IMR-90 (cell line): ENCODE measurements at regions of chr20 and their contacts with region 1.

Region 1: DNA sequence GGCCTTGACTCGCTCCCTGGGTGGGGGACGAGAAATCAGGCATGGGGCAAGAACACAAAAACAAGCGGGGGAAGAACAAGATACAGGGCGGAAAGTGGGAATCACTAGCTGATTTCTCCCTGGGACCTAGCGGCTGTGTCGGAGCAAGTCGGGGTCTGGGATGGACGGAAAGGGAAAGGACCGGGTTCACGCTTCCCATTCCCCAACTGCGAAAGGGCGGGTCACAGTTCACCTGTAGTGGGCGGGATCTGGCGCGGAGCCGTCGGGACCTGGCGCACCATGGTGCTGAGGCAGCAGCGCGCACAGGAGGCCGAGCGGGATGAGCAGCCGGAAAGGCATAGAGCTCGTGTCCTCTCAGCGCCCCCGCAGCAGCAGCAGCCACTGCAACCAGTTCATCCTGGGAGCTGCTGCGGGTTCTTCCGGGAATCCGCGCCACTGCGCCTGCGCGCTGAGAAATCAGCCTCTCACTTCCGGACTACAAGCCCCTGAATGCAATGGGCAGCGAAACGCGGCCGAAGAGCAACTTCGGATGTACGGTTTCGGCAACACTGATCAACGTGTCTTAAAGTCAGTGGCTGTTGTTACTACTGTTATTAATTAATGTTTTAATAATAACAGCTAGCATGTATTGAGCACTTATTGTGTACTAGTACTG is at the start of gene EDEM2:
- DNase-seq: peak; percentile 96
- ATAC-seq: peak; percentile 92
- H3K4me3 ChIP-seq: peak within 1 kb of the TSS; percentile 82
- H3K27ac ChIP-seq: peak within 1 kb of the TSS; percentile 66
- H3K4me1 ChIP-seq: peaks cover 5% of the 10 kb centered on the region; the same call in 1 of the 2 replicates
- H3K27me3 ChIP-seq: no peaks in the 10 kb centered on the region
- CTCF ChIP-seq: no peak
- POLR2A ChIP-seq: no peak
- RAD21 ChIP-seq: peak; percentile 10; the same call in 1 of the 2 replicates
- total RNA-seq, gene EDEM2: 22.5 and 27.4 TPM in 2 replicates

Region 2: GRCh38 chr20:35171753-35172433 is 24.8 kb after region 1 on chr20 and contains the start of gene PROCR:
- CTCF ChIA-PET with region 1: interaction called, 4 read pairs
- POLR2A ChIA-PET with region 1: no interaction called
- dilution Hi-C with region 1: no loop called
- in situ Hi-C with region 1: no loop called
- intact Hi-C with region 1: loop called (anchors 2 kb)
- DNase-seq: peak; percentile 90
- ATAC-seq: peak; percentile 98
- H3K4me3 ChIP-seq: peak within 1 kb of the TSS; percentile 53
- H3K27ac ChIP-seq: peak within 1 kb of the TSS; percentile 69
- H3K4me1 ChIP-seq: peaks cover 5% of the 10 kb centered on the region; the same call in 1 of the 2 replicates
- H3K27me3 ChIP-seq: no peaks in the 10 kb centered on the region
- CTCF ChIP-seq: no peak
- POLR2A ChIP-seq: no peak
- RAD21 ChIP-seq: no peak
- total RNA-seq, gene PROCR: 25.0 and 36.4 TPM in 2 replicates

Region 3: DNA sequence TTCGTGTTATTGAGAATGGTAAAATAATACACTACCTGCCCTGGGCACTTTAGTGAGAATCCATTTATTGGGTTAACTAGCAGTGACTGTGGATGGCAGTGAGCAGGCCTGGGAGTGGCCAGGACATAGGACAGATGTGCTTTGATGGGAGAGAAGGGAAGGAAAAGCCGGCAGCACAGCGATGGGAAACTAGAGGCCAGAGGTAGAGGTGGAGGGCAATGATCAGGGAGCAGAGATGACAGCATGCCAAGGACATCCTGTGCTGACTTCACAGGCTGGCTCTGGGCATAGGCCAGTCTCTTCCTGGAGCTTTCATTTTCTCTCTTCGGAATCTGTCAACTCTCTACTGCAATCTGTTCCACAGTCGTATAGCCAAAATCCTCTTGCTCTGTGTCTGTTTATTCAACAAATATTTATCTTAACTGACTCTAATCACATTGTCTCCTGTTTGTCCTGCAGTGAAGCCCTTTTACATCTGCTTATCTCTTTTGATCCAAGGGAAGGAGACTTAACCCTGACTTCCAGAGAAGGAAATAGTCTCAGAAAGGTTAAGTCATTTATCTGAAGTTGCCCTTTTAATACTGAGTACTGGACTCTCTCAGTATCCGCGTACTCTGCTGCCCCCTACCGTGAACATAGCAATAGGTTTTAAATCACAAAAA is 61.0 kb after region 1 on chr20:
- CTCF ChIA-PET with region 1: interaction called, 26 read pairs
- POLR2A ChIA-PET with region 1: no interaction called
- dilution Hi-C with region 1: no loop called
- in situ Hi-C with region 1: loop called (anchors 10 kb)
- intact Hi-C with region 1: loop called (anchors 1 kb)
- DNase-seq: peak; percentile 78
- ATAC-seq: peak; percentile 98
- H3K4me3 ChIP-seq: no peak overlapping the region
- H3K27ac ChIP-seq: peak overlapping the region; percentile 39
- H3K4me1 ChIP-seq: peaks cover 3% of the 10 kb centered on the region; the same call in 1 of the 2 replicates
- H3K27me3 ChIP-seq: no peaks in the 10 kb centered on the region
- CTCF ChIP-seq: peak; percentile 94
- POLR2A ChIP-seq: 0 out of 2 replicates have a peak, but pooled peaks have one; percentile 32
- RAD21 ChIP-seq: peak; percentile 97

Region 4: DNA sequence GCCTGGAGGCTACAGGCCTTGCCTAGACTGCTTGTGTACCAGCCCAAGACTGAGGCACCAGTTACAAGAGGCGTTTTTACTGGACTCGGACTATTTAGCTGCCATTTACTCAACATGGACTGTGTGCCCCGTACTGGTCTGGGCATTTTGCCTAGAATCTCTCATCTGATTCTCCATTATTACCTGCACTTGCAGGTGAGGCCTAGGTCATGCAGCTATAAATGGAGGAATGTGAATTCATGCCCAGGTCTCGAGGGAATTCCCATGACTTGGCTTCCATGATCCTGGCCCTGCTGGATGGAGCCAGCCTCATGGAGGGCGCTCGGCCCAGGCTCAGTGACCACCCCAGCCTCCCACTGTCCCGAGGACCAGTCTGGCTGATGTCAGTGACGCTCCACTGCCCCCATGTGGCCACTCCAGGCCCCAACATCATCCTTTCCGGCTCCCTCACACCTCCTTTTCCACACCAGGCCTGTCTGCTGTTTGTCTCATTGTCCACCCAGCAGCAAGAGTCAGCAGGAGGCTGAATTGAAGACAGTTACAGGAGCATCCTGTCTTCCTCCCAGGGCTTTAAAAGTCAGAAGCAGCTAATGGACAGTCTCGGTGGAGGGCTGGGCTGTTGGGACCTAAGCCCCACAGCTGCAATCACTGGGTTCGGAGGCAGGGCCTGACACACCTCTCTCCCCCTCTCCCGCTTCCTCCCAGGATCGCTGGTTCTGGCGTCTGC is 122.2 kb after region 1 on chr20:
- CTCF ChIA-PET with region 1: interaction called, 8 read pairs
- POLR2A ChIA-PET with region 1: interaction called, 3 read pairs
- dilution Hi-C with region 1: no loop called
- in situ Hi-C with region 1: loop called (anchors 5 kb)
- intact Hi-C with region 1: loop called (anchors 1 kb)
- DNase-seq: peak; percentile 62
- ATAC-seq: peak; percentile 84
- H3K4me3 ChIP-seq: no peak overlapping the region
- H3K27ac ChIP-seq: no peak overlapping the region
- H3K4me1 ChIP-seq: no peaks in the 10 kb centered on the region
- H3K27me3 ChIP-seq: no peaks in the 10 kb centered on the region
- CTCF ChIP-seq: peak; percentile 79
- POLR2A ChIP-seq: no peak
- RAD21 ChIP-seq: peak; percentile 89

Region 5: GRCh38 chr20:35447082-35447789 is 300.2 kb after region 1 on chr20:
- CTCF ChIA-PET with region 1: no interaction called
- POLR2A ChIA-PET with region 1: no interaction called
- dilution Hi-C with region 1: no loop called
- in situ Hi-C with region 1: loop called (anchors 25 kb)
- intact Hi-C with region 1: loop called (anchors 2 kb)
- DNase-seq: peak; percentile 73
- ATAC-seq: peak; percentile 96
- H3K4me3 ChIP-seq: peak overlapping the region; percentile 32; the same call in 1 of the 2 replicates
- H3K27ac ChIP-seq: no peak overlapping the region
- H3K4me1 ChIP-seq: peaks cover 2% of the 10 kb centered on the region
- H3K27me3 ChIP-seq: no peaks in the 10 kb centered on the region
- CTCF ChIP-seq: peak; percentile 85
- POLR2A ChIP-seq: no peak
- RAD21 ChIP-seq: peak; percentile 82